H1 (cell line): ENCODE measurements at regions of chr11 and their contacts with region 1.

Region 1: DNA sequence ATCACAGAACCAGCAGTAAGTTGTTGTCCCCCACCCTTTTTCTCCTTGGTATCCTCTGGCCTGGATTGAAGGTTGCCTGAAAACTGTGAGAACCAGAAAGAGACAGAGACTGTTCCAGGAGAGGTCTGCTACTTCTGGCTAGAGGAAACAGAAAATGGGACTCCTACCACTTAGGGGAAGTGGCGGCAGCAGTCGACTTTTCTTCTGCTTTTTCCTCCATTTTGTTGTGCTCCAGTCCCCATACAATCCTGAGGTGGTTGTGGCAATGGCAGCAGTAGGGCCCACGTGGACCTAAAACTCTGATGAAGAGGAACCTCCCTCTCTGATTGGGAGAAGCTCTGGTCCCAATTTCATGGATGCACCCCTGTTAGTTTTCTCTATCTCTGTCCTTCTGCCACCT is 76.0 kb upstream of the SORL1 start:
- DNase-seq: no peak
- H3K4me3 ChIP-seq: no peak overlapping the region
- H3K27ac ChIP-seq: no peak overlapping the region
- H3K4me1 ChIP-seq: peaks cover 7 to 23% (median 16%) of the 10 kb centered on the region in 4 experiments; a peak in 5 of 7 replicates
- H3K27me3 ChIP-seq: no peaks in the 10 kb centered on the region
- CTCF ChIP-seq: no peak
- EP300 ChIP-seq: no peak
- POLR2A ChIP-seq: no peak
- RAD21 ChIP-seq: no peak

Region 2: DNA sequence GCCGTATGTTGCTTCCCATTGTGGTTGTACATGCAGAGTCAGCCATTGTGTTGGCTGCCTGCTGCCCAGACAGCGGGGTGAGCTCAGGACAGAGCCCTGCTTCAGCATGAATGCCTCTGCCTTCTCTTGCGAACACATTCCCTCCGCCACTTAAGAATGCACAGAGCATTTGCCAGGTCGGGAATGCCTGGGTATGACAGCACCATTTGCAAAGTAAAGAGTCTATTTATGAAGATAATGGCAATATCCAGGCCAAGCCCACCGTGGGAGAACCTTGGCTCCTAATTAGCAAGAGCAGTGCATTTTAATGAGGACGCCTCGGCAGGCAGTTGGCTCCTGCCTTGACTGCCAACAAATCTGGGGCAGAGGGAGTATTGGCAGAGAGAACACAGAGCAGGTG is 13.5 kb after region 1 on chr11:
- CTCF ChIA-PET with region 1: interaction called, 33 read pairs
- POLR2A ChIA-PET with region 1: no interaction called
- DNase-seq: no peak
- H3K4me3 ChIP-seq: no peak overlapping the region
- H3K27ac ChIP-seq: no peak overlapping the region
- H3K4me1 ChIP-seq: peaks cover 5 to 11% (median 9%) of the 10 kb centered on the region in 4 experiments; a peak in 6 of 7 replicates
- H3K27me3 ChIP-seq: no peaks in the 10 kb centered on the region
- CTCF ChIP-seq: no peak
- EP300 ChIP-seq: no peak
- POLR2A ChIP-seq: no peak
- RAD21 ChIP-seq: no peak